Activated CD4-positive, alpha-beta T cell treated with anti-CD3 and anti-CD28 coated beads for 36 hours (primary cell): ENCODE measurements at regions of chr19 and their contacts with region 1.

Region 1: GRCh38 chr19:18919086-18919899 is at the starts of genes COPE and DDX49:
- DNase-seq: peak; percentile 98
- ATAC-seq: peak; percentile 98
- H3K4me3 Mint-ChIP-seq: peak within 1 kb of the TSS; percentile 99
- H3K27ac Mint-ChIP-seq: peak within 1 kb of the TSS; percentile 96
- H3K4me1 Mint-ChIP-seq: peaks cover 41% of the 10 kb centered on the region
- H3K27me3 Mint-ChIP-seq: no peaks in the 10 kb centered on the region
- total RNA-seq, gene COPE: 158 to 182 TPM
- total RNA-seq, gene DDX49: 51.4 to 53.4 TPM

Region 2: DNA sequence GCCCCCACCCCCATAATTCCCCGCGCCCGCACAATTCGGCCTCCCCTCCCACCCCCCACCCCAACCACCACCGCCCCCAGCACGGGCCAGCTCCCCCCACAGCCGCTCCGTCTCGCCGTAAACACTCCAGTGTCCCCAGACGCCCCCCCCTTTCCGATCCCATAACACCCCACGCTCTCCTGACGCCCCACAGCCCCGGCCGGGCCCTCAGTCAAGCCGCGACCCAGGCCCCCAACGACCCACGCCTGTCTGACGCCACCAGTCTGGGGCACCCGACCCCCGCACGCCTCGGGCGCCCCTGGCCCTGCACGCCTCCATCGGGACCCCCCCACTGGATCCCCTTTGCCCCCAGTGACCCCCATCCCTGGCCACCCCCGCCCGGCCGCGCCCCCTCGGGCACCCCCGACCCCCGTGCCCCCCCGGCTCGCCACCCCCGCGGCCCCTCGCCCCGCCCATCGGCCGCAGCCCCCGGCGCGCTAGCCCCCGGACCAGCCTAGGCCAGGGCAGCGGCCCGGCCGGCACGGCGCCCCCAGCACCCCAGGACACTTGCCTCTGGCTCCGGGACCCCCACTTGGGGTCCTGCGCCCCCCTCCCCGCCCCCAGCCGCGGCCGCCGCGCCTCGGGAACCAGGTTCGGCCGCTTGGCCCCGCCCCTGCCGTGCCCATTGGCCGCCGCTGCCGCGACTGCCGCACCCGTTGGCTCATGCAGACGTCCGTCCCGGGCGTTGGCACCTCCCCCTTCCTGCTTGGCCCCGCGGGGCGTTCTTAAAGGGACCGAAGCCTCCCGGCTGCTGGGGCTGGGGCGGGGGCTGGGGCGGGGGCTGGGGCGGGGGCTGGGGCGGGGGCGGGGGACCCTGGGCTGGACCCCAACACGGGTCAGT is 376.1 kb before region 1 on chr19 and contains the start of gene FKBP8:
- CTCF ChIA-PET with region 1: no interaction called
- POLR2A ChIA-PET with region 1: no interaction called
- intact Hi-C with region 1: loop called in 1 of 2 experiments (anchors 1 kb)
- DNase-seq: peak; percentile 98
- ATAC-seq: peak; percentile 92
- H3K4me3 Mint-ChIP-seq: peak within 1 kb of the TSS; percentile 92
- H3K27ac Mint-ChIP-seq: peak within 1 kb of the TSS; percentile 98
- H3K4me1 Mint-ChIP-seq: peaks cover 25% of the 10 kb centered on the region
- H3K27me3 Mint-ChIP-seq: no peaks in the 10 kb centered on the region
- total RNA-seq, gene FKBP8: 208 to 211 TPM

Region 3: DNA sequence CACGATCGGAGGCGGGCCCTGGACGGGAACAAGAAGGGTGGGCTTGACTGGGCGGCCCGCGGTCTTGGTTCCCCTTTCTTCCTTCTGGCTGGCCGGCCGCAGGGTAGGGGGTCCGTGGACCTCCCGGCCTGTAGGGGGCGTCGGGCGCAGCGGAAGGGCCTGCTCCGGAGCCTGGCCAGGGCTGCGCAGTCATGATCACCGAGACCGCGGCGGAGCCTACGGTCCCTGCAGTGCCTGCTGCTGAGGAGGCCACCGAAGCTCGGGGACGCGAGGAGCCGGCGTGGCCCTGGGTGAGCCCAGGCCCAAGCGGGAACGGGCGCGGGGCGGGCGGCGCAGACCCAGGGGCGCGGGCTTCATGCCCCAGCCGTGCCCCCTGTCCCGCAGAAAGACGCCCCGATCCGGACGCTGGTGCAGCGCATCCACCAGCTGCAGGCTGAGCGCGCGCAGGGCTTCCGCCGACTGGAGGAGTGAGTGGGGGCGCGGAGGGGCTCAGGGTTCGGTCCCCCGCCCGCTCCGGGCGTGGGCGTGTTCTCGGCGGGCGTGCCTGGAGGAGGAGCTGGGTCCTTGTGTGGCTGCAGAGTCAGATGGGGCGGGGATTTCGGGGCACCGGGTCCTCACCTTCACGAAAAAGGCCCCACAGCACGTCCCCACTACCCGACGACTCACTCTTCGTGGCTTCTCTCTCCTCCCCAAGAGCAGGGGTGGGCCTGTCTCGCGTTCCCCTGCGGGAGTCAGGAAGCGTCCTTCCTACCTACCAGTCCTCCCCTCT is 330.5 kb before region 1 on chr19 and contains the start of gene REX1BD:
- CTCF ChIA-PET with region 1: interaction called, 11 read pairs
- POLR2A ChIA-PET with region 1: interaction called, 3 read pairs
- intact Hi-C with region 1: loop called (anchors 1 to 2 kb)
- DNase-seq: peak; percentile 91
- ATAC-seq: peak; percentile 81
- H3K4me3 Mint-ChIP-seq: peak within 1 kb of the TSS; percentile 90
- H3K27ac Mint-ChIP-seq: peak within 1 kb of the TSS; percentile 92
- H3K4me1 Mint-ChIP-seq: peaks cover 31% of the 10 kb centered on the region
- H3K27me3 Mint-ChIP-seq: no peaks in the 10 kb centered on the region
- total RNA-seq, gene REX1BD: 47.8 to 81.3 TPM

Region 4: DNA sequence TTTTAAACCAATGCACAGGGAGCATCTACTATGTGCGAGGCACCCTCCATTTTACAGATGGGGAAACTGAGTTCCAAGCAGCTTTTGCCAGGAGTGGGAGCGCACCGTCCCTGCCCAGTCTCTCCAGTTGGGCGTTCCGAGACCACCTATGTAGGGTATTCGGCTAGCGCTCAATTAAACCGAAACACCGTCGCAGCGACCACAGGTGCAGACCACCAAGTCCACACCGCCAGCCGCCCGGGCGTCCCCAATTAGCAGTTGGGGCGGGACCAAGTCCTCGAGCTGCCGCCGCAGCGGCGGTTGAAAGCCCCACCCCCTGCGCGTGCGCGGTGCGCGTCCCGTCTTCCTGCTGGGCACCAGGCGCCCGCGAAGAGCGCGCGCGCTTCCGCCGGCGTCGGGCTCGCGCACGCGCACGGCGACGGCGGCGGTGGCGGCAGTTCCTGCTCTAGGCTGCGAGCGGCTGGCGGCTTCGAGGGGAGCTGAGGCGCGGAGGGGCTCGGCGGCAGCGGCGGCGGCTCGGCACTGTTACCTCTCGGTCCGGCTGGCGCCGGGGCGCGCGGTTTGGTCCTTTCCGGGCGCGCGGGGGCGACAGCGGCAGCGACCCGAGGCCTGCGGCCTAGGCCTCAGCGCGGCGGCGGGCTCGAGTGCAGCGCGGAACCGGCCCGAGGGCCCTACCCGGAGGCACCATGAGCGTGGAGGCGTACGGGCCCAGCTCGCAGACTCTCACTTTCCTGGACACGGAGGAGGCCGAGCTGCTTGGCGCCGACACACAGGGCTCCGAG is 87.6 kb before region 1 on chr19 and contains the start of gene UPF1:
- CTCF ChIA-PET with region 1: no interaction called
- POLR2A ChIA-PET with region 1: interaction called, 12 read pairs
- intact Hi-C with region 1: loop called in 1 of 2 experiments (anchors 1 kb)
- DNase-seq: peak; percentile 98
- ATAC-seq: peak; percentile 82
- H3K4me3 Mint-ChIP-seq: peak within 1 kb of the TSS; percentile 96
- H3K27ac Mint-ChIP-seq: peak within 1 kb of the TSS; percentile 90
- H3K4me1 Mint-ChIP-seq: peaks cover 34% of the 10 kb centered on the region
- H3K27me3 Mint-ChIP-seq: peaks cover 3% of the 10 kb centered on the region
- total RNA-seq, gene UPF1: 72.4 to 74.0 TPM

Region 5: DNA sequence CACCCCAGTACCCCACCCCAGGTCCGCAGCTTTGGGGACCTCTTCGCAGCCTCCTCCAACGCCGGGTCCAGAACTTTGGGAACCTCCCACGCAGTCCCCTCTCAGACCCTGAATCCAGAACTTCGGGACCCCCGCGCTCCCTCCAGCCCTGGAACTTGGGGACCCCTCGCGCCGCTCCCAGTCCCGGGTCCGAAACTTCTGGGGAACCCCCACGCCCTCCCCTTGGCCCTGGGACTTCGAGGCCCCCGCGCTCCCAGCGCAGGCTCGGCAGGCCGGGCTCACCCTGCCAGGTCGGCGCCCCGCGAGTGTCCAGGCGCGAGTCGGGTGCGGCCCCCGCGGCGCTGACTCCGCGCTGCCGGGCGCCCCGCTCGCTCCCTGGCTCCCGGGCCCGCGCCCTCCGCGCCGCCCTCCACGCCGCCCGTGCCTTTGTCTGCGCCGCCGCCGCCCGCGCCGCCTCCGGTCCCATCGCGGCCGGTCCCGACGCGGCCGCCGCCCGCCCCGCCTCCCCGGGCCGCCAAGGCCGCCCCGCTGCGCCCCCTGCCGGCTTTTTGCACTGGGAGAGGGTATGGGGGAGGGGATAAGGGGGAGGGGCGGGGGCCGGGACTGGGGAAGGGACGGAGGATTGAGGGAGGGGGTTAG is 21.6 kb after region 1 on chr19 and contains the start of gene HOMER3:
- CTCF ChIA-PET with region 1: interaction called, 3 read pairs
- POLR2A ChIA-PET with region 1: no interaction called
- intact Hi-C with region 1: loop called (anchors 1 kb)
- DNase-seq: peak; percentile 87
- ATAC-seq: peak; percentile 91
- H3K4me3 Mint-ChIP-seq: peak within 1 kb of the TSS; percentile 48
- H3K27ac Mint-ChIP-seq: no peak within 1 kb of the TSS
- H3K4me1 Mint-ChIP-seq: peaks cover 6% of the 10 kb centered on the region
- H3K27me3 Mint-ChIP-seq: peaks cover 25% of the 10 kb centered on the region
- total RNA-seq, gene HOMER3: 0.46 to 0.62 TPM

Region 6: DNA sequence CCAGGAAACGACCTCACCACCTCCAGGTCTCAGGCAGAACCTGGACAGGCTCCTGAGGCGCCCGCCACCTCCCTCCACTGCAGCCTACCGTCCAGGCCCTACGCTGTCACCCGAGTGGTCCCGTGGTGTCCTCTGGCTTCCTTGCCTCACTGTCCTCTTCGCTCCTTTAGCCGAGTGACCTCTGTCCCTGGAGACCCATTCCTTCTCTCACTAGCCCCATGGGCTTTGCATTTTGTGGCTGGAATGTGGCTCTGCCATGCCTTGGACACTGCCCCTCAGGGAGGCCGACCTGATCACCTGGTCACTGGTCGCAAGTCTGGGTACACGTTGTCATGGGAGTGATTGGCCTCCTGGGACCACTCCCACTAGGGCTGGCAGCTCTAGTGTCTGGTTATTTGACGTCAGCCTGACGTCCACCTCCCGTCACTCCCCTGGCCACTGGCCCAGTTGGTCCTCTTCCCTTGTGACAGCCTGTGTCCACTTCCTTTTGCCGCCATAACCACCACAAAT is 162.4 kb after region 1 on chr19:
- CTCF ChIA-PET with region 1: no interaction called
- POLR2A ChIA-PET with region 1: no interaction called
- intact Hi-C with region 1: no loop called
- DNase-seq: no peak
- ATAC-seq: no peak
- H3K4me3 Mint-ChIP-seq: no peak overlapping the region
- H3K27ac Mint-ChIP-seq: no peak overlapping the region
- H3K4me1 Mint-ChIP-seq: peaks cover 2% of the 10 kb centered on the region
- H3K27me3 Mint-ChIP-seq: no peaks in the 10 kb centered on the region

Region 7: DNA sequence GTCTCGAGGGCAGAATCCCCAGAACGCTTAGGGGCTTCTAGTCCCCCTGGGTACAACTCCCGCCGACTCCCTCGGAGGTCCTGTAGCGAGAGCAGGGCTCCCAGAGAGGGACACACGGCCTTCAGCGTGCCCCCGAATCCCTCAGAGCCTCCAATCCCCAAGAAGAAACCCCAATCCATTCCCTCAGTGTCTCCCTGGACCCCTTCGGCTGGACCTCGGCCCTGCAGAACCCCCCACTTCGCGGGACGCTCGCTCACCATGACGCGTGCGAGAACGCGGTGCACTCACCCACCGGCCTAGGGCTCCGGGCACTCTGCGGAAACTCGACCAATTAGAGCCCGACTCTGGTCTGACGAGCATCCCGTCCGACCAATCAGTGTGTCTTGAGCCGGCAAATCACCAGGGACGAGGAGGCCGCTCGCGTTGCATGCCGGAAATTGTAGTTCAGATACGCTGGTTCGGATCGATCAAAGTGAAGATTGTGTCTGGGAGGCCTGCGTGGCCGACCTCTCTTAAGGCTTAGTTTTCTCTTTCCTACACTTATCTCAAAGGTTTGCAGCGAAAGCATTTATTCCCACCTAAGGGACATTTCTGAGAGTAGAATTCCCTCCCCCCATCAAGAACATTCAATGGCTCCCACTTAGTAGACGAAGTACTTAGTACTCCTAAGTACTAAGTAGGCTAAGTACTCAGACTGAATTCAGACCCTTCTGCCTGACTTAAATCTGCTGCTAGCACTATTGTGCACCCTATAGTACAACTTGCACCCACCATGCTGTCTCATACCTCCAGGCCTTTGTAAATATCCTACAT is 219.1 kb after region 1 on chr19 and contains the start of gene TMEM161A:
- CTCF ChIA-PET with region 1: no interaction called
- POLR2A ChIA-PET with region 1: no interaction called
- intact Hi-C with region 1: loop called (anchors 1 kb)
- DNase-seq: peak; percentile 98
- ATAC-seq: peak; percentile 100
- H3K4me3 Mint-ChIP-seq: peak within 1 kb of the TSS; percentile 93
- H3K27ac Mint-ChIP-seq: peak within 1 kb of the TSS; percentile 95
- H3K4me1 Mint-ChIP-seq: peaks cover 30% of the 10 kb centered on the region
- H3K27me3 Mint-ChIP-seq: no peaks in the 10 kb centered on the region
- total RNA-seq, gene TMEM161A: 26.8 to 31.9 TPM